ENCODE measurements at regions of chr18 and their contacts with region 1.

Region 1: DNA sequence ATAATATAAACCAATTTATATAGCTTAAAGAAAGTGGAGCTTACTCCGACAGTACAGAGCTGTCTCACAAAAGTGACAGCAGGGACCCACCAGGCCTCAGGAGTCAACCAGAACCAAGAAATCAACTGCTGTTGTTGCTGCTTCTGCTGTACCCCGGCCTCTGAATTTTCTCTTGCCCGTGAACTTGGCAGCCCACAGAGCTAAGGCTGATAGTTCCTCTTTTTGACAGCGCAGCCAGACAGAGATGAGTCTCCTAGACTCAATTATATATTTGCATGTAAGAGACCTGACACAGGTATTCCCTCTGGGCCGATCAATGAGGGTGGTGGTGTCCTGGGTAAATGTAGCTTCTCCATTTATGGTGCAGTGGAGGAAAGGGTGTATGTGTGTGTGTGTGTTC is 109.4 kb downstream of the KCTD1 start:
- DNase-seq: no peak
- ATAC-seq: no peak
- H3K4me3 ChIP-seq: no peak overlapping the region
- H3K4me3 Mint-ChIP-seq: no peak overlapping the region
- H3K27ac ChIP-seq: no peak overlapping the region
- H3K27ac Mint-ChIP-seq: no peak overlapping the region
- H3K4me1 ChIP-seq: no peaks in the 10 kb centered on the region
- H3K4me1 Mint-ChIP-seq: no peaks in the 10 kb centered on the region
- H3K27me3 ChIP-seq: peaks cover 0 to 9% of the 10 kb centered on the region in 2 experiments
- H3K27me3 Mint-ChIP-seq: peaks cover 19 to 26% of the 10 kb centered on the region in 2 donors

Region 2: DNA sequence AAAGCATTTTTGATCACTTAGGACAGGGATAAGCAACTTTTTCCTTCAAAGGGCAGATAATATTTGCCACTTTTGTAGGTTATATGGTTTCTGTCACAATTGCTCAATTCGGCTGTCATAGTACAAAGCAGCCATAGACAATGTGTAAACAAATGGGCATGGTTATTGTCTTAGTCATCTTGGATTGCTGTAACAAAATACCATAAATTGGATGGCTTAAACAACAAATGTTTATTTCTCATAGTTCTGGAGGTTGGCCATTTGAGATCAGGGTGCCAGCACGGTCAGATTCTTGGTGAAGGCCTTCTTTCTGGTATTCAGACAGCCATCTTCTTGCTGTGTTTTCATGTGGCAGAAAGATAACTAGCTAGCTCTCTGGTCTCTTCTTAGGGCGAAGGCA is 121.6 kb before region 1 on chr18:
- CTCF ChIA-PET with region 1: interaction called in 1 of 2 experiments, 12 read pairs
- POLR2A ChIA-PET with region 1: no interaction called
- DNase-seq: no peak
- ATAC-seq: no peak
- H3K4me3 ChIP-seq: no peak overlapping the region
- H3K4me3 Mint-ChIP-seq: no peak overlapping the region
- H3K27ac ChIP-seq: no peak overlapping the region
- H3K27ac Mint-ChIP-seq: no peak overlapping the region
- H3K4me1 ChIP-seq: no peaks in the 10 kb centered on the region
- H3K4me1 Mint-ChIP-seq: no peaks in the 10 kb centered on the region
- H3K27me3 ChIP-seq: no peaks in the 10 kb centered on the region
- H3K27me3 Mint-ChIP-seq: no peaks in the 10 kb centered on the region

Region 3: DNA sequence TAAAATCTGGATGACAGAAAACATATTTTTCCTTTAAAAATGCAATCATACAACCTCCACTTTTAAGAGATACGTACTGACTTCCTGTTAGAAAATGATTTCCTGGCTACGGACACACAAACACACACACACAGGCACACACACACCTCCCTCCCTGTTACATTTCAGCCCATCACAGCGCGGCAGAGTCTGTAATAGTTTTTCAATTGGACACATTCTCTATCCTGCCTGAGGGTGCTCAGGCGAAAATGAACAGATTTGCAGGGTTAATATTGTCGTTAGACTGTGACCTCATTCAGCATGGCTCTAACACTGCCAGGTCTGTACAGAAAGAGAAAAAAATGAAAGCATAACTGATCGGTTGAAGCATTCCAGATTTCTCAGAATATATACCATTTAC is 64.4 kb after region 1 on chr18:
- CTCF ChIA-PET with region 1: no interaction called
- POLR2A ChIA-PET with region 1: no interaction called
- DNase-seq: no peak
- ATAC-seq: no peak
- H3K4me3 ChIP-seq: no peak overlapping the region
- H3K4me3 Mint-ChIP-seq: no peak overlapping the region
- H3K27ac ChIP-seq: no peak overlapping the region
- H3K27ac Mint-ChIP-seq: no peak overlapping the region
- H3K4me1 ChIP-seq: peaks cover 0 to 5% of the 10 kb centered on the region in 2 experiments
- H3K4me1 Mint-ChIP-seq: peaks cover 0 to 3% (median 2%) of the 10 kb centered on the region in 3 donors
- H3K27me3 ChIP-seq: no peaks in the 10 kb centered on the region
- H3K27me3 Mint-ChIP-seq: no peaks in the 10 kb centered on the region